GM12878 (cell line): ENCODE measurements at regions of chr4 and their contacts with region 1.

Region 1: GRCh38 chr4:109424093-109424841 is 9.3 kb upstream of the SEC24B start:
- DNase-seq: no peak
- ATAC-seq: peak; percentile 68
- H3K4me3 ChIP-seq: no peak overlapping the region
- H3K27ac ChIP-seq: no peak overlapping the region
- H3K4me1 ChIP-seq: no peaks in the 10 kb centered on the region
- H3K27me3 ChIP-seq: no peaks in the 10 kb centered on the region
- CTCF ChIP-seq: no peak
- EP300 ChIP-seq: no peak
- POLR2A ChIP-seq: no peak
- RAD21 ChIP-seq: no peak

Region 2: DNA sequence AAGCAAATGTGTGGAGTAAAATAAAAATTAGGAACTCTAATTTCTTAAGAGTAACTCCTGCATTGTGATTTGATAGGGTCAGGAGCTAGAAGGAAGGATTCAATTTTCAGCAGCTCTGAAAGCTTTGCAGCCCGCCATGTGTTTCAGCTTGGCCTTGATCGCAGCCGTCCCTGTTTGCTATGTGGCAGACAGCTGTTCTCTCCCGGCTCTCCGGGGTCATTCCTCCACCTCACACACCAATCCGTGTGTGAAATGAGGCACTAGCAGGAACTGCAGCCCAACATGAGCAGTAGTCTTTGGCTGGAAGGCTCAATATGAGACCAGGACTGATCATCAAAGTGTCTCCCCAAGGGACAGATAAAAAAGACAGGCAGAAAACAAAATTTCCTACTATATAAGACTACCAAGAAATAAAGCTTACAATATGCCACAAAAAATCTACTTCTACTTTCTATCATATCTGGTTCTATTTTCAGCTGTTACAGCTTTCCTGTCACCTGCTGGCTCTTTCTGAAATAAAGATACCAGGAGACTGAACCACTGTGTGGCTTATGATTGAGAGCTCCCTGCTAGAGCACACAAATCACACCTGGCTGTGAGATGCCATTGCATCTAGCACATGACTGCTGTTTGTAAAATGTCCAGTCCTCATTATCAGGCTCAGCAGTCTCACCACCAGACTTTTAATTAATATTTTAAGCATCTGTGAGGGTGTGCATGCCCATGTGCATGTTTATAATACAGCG is 34.7 kb before region 1 on chr4:
- CTCF ChIA-PET with region 1: no interaction called
- POLR2A ChIA-PET with region 1: no interaction called
- RAD21 ChIA-PET with region 1: no interaction called
- SMC1A ChIA-PET with region 1: no interaction called
- in situ Hi-C with region 1: no loop called
- intact Hi-C with region 1: no loop called
- DNase-seq: peak; percentile 23
- ATAC-seq: peak; percentile 72
- H3K4me3 ChIP-seq: no peak overlapping the region
- H3K27ac ChIP-seq: peak overlapping the region; percentile 2; the same call in 1 of the 2 replicates
- H3K4me1 ChIP-seq: peaks cover 17% of the 10 kb centered on the region
- H3K27me3 ChIP-seq: no peaks in the 10 kb centered on the region
- CTCF ChIP-seq: no peak
- EP300 ChIP-seq: no peak
- POLR2A ChIP-seq: no peak
- RAD21 ChIP-seq: no peak

Region 3: DNA sequence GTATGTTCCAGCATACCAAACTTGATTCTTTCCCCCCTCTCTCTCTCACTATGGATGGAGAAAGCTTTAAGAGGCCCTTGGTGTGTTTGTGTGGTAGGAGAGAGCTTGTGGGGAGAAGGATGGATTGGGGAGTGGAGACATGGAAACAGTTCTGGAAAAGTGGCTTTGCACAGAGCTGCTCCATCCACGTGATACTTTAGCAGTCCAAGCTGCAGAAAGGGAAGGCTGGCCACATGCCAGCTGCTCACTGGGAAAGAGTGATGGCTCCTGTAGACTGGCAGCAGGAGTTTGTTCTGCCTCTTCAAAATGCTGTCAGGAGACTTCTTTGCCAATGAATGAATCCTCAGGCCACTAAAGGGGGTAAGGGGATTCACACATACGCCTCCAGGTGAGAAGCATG is 12.3 kb before region 1 on chr4:
- CTCF ChIA-PET with region 1: interaction called, 11 read pairs
- POLR2A ChIA-PET with region 1: no interaction called
- RAD21 ChIA-PET with region 1: no interaction called
- SMC1A ChIA-PET with region 1: interaction called, 3 read pairs
- in situ Hi-C with region 1: no loop called
- intact Hi-C with region 1: no loop called
- DNase-seq: no peak
- ATAC-seq: no peak
- H3K4me3 ChIP-seq: no peak overlapping the region
- H3K27ac ChIP-seq: no peak overlapping the region
- H3K4me1 ChIP-seq: no peaks in the 10 kb centered on the region
- H3K27me3 ChIP-seq: peaks cover 0 to 2% of the 10 kb centered on the region in 2 experiments; a peak in 2 of 4 replicates
- CTCF ChIP-seq: no peak
- EP300 ChIP-seq: no peak
- POLR2A ChIP-seq: no peak
- RAD21 ChIP-seq: no peak

Region 4: DNA sequence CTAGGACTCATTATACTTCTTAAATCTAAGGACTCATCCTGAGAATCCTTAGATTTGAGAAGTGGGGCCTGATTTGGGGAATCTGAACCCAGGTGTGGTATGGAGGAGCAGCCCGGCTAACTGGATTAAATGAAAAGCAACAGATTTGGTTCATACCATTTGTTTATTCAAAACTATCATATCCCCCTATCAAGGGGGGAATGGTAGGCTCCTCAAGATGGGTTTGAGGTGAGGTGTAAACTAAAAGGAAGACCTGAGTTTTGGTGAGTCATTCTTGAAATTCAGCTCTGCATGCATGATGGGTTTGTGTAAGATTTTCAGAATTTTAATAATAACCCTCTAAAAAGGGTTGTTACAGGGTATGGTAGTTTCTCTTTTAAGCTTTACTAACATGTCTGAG is 225.6 kb after region 1 on chr4:
- CTCF ChIA-PET with region 1: interaction called, 4 read pairs
- POLR2A ChIA-PET with region 1: no interaction called
- RAD21 ChIA-PET with region 1: no interaction called
- SMC1A ChIA-PET with region 1: no interaction called
- in situ Hi-C with region 1: no loop called
- intact Hi-C with region 1: loop called (anchors 5 kb)
- DNase-seq: peak; percentile 56
- ATAC-seq: peak; percentile 93
- H3K4me3 ChIP-seq: peak overlapping the region; percentile 13; the same call in 1 of the 2 replicates
- H3K27ac ChIP-seq: peak overlapping the region; percentile 58
- H3K4me1 ChIP-seq: peaks cover 28% of the 10 kb centered on the region
- H3K27me3 ChIP-seq: no peaks in the 10 kb centered on the region
- CTCF ChIP-seq: no peak
- EP300 ChIP-seq: no peak
- POLR2A ChIP-seq: no peak
- RAD21 ChIP-seq: no peak

Region 5: GRCh38 chr4:109803924-109804571 is 379.8 kb after region 1 on chr4:
- CTCF ChIA-PET with region 1: interaction called, 7 read pairs
- POLR2A ChIA-PET with region 1: no interaction called
- RAD21 ChIA-PET with region 1: interaction called, 6 read pairs
- SMC1A ChIA-PET with region 1: interaction called, 9 read pairs
- in situ Hi-C with region 1: no loop called
- intact Hi-C with region 1: loop called (anchors 1 kb)
- DNase-seq: peak; percentile 7
- ATAC-seq: peak; percentile 94
- H3K4me3 ChIP-seq: no peak overlapping the region
- H3K27ac ChIP-seq: no peak overlapping the region
- H3K4me1 ChIP-seq: no peaks in the 10 kb centered on the region
- H3K27me3 ChIP-seq: peaks cover 0 to 2% of the 10 kb centered on the region in 2 experiments; a peak in 1 of 4 replicates
- CTCF ChIP-seq: peak; percentile 50 to 67 (median 53); a peak in 5 of 6 replicates
- EP300 ChIP-seq: no peak
- POLR2A ChIP-seq: no peak
- RAD21 ChIP-seq: peak; percentile 70

Region 6: DNA sequence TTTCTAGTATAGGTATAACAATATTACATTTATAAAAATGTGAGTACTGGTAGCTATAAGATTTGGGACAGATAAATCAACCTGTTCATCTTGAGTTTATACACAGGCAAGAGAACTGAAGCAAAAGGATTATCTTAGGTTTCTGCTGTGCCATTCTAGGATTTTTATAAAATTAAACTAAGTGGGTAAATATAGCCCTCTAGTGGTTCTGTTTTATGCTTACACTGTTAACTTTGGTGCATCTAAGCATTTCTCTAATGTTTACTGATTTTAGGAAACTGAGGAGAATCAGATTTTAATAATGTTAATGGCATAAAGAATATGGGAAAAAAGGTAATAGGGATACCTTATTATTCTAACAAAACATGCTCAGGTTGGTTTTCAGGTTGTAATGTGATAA is 402.5 kb after region 1 on chr4:
- CTCF ChIA-PET with region 1: interaction called, 36 read pairs
- POLR2A ChIA-PET with region 1: no interaction called
- RAD21 ChIA-PET with region 1: interaction called, 5 read pairs
- SMC1A ChIA-PET with region 1: interaction called, 7 read pairs
- in situ Hi-C with region 1: no loop called
- intact Hi-C with region 1: loop called (anchors 2 kb)
- DNase-seq: no peak
- ATAC-seq: peak; percentile 80
- H3K4me3 ChIP-seq: no peak overlapping the region
- H3K27ac ChIP-seq: no peak overlapping the region
- H3K4me1 ChIP-seq: no peaks in the 10 kb centered on the region
- H3K27me3 ChIP-seq: no peaks in the 10 kb centered on the region
- CTCF ChIP-seq: peak; percentile 22 to 54 (median 40); a peak in 4 of 6 replicates
- EP300 ChIP-seq: no peak
- POLR2A ChIP-seq: no peak
- RAD21 ChIP-seq: peak; percentile 69

Region 7: DNA sequence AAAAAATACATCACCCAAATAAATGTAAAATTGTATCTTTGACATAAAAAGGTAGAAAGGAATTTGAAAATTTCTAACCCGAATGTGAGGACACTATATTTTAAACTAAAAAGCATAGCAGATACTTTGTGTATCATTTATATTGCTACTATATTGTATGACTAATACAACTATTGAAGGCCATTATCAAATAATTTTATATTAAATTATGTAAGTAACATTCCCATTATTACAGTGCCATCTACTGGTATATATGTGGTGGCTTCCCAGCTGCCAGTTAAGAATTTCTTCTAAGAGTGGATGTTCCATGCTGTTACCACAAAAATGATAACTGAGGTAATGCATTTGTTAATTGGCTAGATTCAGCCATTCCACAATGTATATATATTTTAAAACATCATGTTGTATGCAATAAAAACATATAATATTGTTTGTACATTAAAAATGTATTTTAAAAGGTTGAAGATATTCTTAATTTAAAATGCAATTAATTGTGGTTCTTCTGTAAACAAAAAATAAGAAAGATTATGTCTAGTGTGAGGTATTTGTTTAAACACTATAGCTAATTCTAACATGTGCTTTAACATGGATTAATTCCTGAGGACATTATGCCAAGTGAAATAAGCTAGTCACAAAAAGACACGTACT is 553.7 kb after region 1 on chr4:
- CTCF ChIA-PET with region 1: interaction called, 17 read pairs
- POLR2A ChIA-PET with region 1: no interaction called
- RAD21 ChIA-PET with region 1: interaction called, 5 read pairs
- SMC1A ChIA-PET with region 1: interaction called, 7 read pairs
- in situ Hi-C with region 1: loop called (anchors 5 kb)
- intact Hi-C with region 1: loop called (anchors 1 kb)
- DNase-seq: no peak
- ATAC-seq: peak; percentile 64
- H3K4me3 ChIP-seq: no peak overlapping the region
- H3K27ac ChIP-seq: no peak overlapping the region
- H3K4me1 ChIP-seq: no peaks in the 10 kb centered on the region
- H3K27me3 ChIP-seq: peaks cover 0 to 2% of the 10 kb centered on the region in 2 experiments; a peak in 3 of 4 replicates
- CTCF ChIP-seq: peak; percentile 20 to 48 (median 28); a peak in 4 of 6 replicates
- EP300 ChIP-seq: no peak
- POLR2A ChIP-seq: no peak
- RAD21 ChIP-seq: peak; percentile 58